Activated naive CD4-positive, alpha-beta T cell treated with anti-CD3 and anti-CD28 coated beads for 36 hours (primary cell): ENCODE measurements at regions of chr14 and their contacts with region 1.

Region 1: GRCh38 chr14:31435276-31435675 is 14.9 kb upstream of the HEATR5A start:
- DNase-seq: no peak
- H3K4me3 Mint-ChIP-seq: no peak overlapping the region
- H3K27ac Mint-ChIP-seq: no peak overlapping the region
- H3K4me1 Mint-ChIP-seq: peaks cover 3% of the 10 kb centered on the region
- H3K27me3 Mint-ChIP-seq: no peaks in the 10 kb centered on the region

Region 2: GRCh38 chr14:31449971-31450610 is 14.8 kb after region 1 on chr14:
- CTCF ChIA-PET with region 1: interaction called, 11 read pairs
- intact Hi-C with region 1: no loop called
- DNase-seq: no peak
- H3K4me3 Mint-ChIP-seq: no peak overlapping the region
- H3K27ac Mint-ChIP-seq: no peak overlapping the region
- H3K4me1 Mint-ChIP-seq: peaks cover 7% of the 10 kb centered on the region
- H3K27me3 Mint-ChIP-seq: no peaks in the 10 kb centered on the region